Posterior vena cava (tissue), 2 donors: ENCODE measurements at regions of chr1 and their contacts with region 1.

Region 1: GRCh38 chr1:155759966-155760630 is 71.2 kb downstream of the DAP3 start:
- DNase-seq: no peak

Region 2: DNA sequence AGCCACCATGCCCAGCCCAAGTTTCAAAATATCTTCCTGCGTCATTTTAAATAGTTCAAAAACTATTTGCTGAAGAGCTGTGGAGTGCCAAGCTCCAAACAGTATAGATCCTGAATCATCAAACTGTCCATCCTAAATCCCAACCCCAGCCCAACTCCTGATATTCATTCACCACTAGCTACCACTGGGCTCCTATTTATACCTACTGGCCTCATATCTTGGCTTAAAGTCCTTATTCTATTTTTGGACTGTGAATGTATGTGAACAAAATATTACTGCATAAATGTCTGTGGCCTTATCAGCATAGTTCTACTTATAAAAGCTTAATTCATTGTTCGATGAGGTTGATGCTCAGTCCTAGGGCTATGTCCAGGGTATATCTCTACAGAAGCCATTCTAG is 492.7 kb before region 1 on chr1:
- intact Hi-C with region 1: no loop called
- DNase-seq: no peak

Region 3: GRCh38 chr1:155834296-155834926 is 74.3 kb after region 1 on chr1:
- intact Hi-C with region 1: loop called in 1 of 2 experiments (anchors 1 kb)
- DNase-seq: no peak

Region 4: DNA sequence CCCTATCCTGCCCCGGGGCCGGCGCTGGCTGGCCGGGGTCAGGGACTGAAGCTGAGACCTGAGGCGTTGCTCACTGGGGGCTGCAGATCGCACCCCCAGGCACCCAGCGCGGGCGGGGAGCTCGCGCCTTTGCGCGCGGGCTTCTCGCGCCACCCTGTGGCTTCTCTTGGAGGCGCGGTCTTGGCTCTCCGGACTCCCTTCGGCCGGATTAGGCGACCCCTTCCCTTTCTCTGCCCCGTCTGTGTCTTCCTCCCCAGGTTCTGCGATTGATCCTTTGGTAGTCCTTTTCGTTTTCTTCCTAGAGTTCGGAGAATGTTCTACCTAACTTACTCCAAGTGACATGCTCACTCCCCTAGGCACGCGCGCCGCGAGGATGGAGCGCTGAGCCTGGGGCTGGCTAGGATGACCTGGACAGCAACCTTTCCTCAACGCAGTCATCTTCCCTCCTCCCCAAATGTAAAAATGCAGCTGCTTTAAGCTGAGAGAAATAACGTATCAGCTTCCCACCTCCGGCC is 1100.1 kb after region 1 on chr1:
- intact Hi-C with region 1: no loop called
- DNase-seq: peak; percentile 85